Naive thymus-derived CD4-positive, alpha-beta T cell (primary cell): ENCODE measurements at regions of chr4 and their contacts with region 1.

Region 1: GRCh38 chr4:53174823-53175222 is 191.0 kb downstream of the SCFD2 start:
- DNase-seq: no peak
- ATAC-seq: no peak
- H3K4me3 ChIP-seq: no peak overlapping the region
- H3K4me3 Mint-ChIP-seq: peak overlapping the region in 2 of 10 donors; percentile 14 to 29
- H3K27ac ChIP-seq: no peak overlapping the region
- H3K27ac Mint-ChIP-seq: no peak overlapping the region
- H3K4me1 ChIP-seq: peaks cover 0 to 6% of the 10 kb centered on the region in 2 donors
- H3K4me1 Mint-ChIP-seq: peaks cover 6 to 33% (median 20%) of the 10 kb centered on the region in 7 donors
- H3K27me3 ChIP-seq: no peaks in the 10 kb centered on the region
- H3K27me3 Mint-ChIP-seq: no peaks in the 10 kb centered on the region

Region 2: DNA sequence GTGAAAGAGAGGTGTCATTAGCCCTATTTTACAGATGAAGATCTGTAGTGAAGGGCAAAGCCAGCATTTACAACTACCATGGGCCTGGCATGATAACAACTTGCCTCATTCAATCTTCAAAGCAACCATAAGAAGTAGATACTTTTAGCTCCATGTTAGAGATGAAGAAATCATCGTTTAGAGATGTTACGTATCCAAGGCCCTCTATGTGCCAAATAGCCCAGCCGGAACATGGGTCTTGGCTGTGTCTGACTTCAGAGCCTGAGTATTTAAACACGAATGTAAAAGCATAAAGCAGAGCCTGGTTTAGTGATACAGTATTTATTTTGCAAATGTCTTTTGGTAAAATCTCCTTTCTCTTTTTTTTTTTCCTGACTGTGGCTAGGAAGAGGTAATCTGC is 115.6 kb before region 1 on chr4:
- CTCF ChIA-PET with region 1: no interaction called
- POLR2A ChIA-PET with region 1: no interaction called
- intact Hi-C with region 1: no loop called
- DNase-seq: no peak
- ATAC-seq: no peak
- H3K4me3 ChIP-seq: no peak overlapping the region
- H3K4me3 Mint-ChIP-seq: no peak overlapping the region
- H3K27ac ChIP-seq: no peak overlapping the region
- H3K27ac Mint-ChIP-seq: no peak overlapping the region
- H3K4me1 ChIP-seq: no peaks in the 10 kb centered on the region
- H3K4me1 Mint-ChIP-seq: peaks cover 0 to 13% (median 0%) of the 10 kb centered on the region in 7 donors
- H3K27me3 ChIP-seq: no peaks in the 10 kb centered on the region
- H3K27me3 Mint-ChIP-seq: no peaks in the 10 kb centered on the region

Region 3: GRCh38 chr4:53161787-53162433 is 12.9 kb before region 1 on chr4:
- CTCF ChIA-PET with region 1: no interaction called
- POLR2A ChIA-PET with region 1: no interaction called
- intact Hi-C with region 1: loop called in 1 of 2 experiments (anchors 1 kb)
- DNase-seq: no peak
- ATAC-seq: no peak
- H3K4me3 ChIP-seq: no peak overlapping the region
- H3K4me3 Mint-ChIP-seq: no peak overlapping the region
- H3K27ac ChIP-seq: no peak overlapping the region
- H3K27ac Mint-ChIP-seq: no peak overlapping the region
- H3K4me1 ChIP-seq: no peaks in the 10 kb centered on the region
- H3K4me1 Mint-ChIP-seq: peaks cover 0 to 5% (median 0%) of the 10 kb centered on the region in 7 donors
- H3K27me3 ChIP-seq: no peaks in the 10 kb centered on the region
- H3K27me3 Mint-ChIP-seq: no peaks in the 10 kb centered on the region

Region 4: DNA sequence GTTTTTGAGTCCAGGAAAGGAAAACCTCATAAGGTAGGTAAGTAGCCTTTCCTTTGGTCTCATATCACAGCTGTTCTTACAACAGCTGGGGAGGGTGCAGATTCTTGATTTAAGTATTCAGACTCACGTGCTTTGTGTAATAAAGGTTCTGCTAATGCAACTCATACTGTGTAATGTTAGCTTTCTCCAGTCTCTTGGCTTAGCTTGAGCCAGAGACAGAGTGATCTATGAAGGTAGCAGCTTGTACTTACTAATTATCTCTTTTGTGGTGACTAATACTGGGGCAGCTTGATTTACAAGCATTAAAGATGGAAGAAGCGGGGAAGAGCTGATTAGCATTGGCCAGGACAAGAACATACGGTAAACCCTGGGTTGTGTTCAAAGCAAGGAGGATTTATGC is 336.2 kb after region 1 on chr4:
- CTCF ChIA-PET with region 1: no interaction called
- POLR2A ChIA-PET with region 1: no interaction called
- intact Hi-C with region 1: no loop called
- DNase-seq: no peak
- ATAC-seq: no peak
- H3K4me3 ChIP-seq: no peak overlapping the region
- H3K4me3 Mint-ChIP-seq: no peak overlapping the region
- H3K27ac ChIP-seq: no peak overlapping the region
- H3K27ac Mint-ChIP-seq: no peak overlapping the region
- H3K4me1 ChIP-seq: no peaks in the 10 kb centered on the region
- H3K4me1 Mint-ChIP-seq: no peaks in the 10 kb centered on the region
- H3K27me3 ChIP-seq: no peaks in the 10 kb centered on the region
- H3K27me3 Mint-ChIP-seq: peaks cover 0 to 14% (median 6%) of the 10 kb centered on the region in 5 donors